Activated naive CD4-positive, alpha-beta T cell treated with anti-CD3 and anti-CD28 coated beads for 36 hours (primary cell): ENCODE measurements at regions of chr2 and their contacts with region 1.

Region 1: DNA sequence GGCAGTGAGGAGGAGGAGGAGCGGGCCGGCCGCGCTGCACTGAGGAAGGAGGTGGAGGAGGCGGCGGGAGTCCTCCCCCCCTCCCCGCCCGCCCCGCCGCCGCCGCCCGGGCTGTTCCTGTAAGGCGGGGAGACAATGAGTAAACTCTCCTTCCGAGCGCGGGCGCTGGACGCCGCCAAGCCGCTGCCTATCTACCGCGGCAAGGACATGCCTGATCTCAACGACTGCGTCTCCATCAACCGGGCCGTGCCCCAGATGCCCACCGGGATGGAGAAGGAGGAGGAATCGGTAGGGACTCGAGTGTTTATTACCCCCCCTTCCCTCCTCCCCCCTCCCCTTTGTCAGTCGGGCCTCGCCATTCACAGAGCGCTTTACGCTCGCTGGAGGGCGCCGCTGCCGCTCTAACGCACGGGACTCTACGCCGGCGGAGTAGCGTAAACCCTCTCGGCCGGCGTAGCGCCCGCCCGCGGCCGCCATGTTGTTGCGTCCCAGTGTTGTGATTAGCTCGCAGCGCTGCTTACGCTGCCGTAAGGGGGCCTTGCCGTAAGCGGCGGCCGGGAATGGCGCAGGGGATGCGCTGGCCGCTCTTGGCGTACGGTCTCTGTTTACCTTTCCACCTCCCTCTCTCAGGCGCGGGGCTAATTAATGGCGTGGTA is 460 bp downstream of the EPC2 start:
- DNase-seq: peak; percentile 94
- H3K4me3 Mint-ChIP-seq: peak overlapping the region; percentile 90
- H3K27ac Mint-ChIP-seq: peak overlapping the region; percentile 97
- H3K4me1 Mint-ChIP-seq: peaks cover 43% of the 10 kb centered on the region
- H3K27me3 Mint-ChIP-seq: no peaks in the 10 kb centered on the region

Region 2: DNA sequence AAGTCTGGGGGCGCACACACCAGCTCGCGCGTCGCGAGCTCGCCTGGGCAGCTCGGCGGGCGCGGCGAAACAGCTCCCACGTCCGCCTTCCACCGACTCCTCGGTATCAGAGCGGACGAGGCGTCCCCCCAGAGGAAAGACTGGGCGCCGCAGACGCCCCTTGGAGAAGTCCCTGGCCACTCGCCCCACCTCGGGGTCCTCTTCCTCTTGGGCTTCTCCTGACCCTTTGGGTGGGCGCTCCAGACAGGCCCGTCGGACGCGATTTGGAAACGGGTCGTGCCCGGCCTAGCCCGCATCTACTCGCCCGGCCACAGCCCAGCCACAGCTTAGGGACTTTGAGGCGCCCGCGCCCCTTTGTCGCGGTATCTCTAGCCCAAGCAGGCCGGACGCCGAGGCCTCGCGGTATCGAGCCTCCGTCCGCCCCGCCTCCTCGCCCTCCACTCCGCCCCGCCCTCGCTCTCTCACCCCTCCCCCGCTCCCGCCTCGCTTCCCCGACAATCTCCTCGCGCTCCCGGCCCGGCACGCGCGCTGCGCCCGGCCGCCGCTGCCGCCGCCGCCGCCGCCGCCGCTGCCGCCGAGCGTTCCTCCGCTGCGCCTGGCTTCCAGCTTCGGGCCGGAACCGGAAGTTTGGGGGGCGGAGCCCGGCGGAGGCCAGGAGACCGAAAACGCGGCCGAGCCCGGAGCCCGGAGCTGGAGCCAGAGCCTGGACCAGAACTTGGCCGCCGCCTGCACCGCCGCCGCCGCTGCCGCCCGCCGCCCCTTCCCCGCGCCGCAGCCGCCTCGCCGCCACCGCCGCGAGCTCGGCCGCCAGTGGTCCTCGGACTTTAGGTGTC is 800.9 kb before region 1 on chr2:
- CTCF ChIA-PET with region 1: no interaction called
- intact Hi-C with region 1: loop called (anchors 5 kb)
- DNase-seq: peak; percentile 89
- H3K4me3 Mint-ChIP-seq: peak overlapping the region; percentile 88
- H3K27ac Mint-ChIP-seq: peak overlapping the region; percentile 68
- H3K4me1 Mint-ChIP-seq: peaks cover 33% of the 10 kb centered on the region
- H3K27me3 Mint-ChIP-seq: peaks cover 12% of the 10 kb centered on the region

Region 3: DNA sequence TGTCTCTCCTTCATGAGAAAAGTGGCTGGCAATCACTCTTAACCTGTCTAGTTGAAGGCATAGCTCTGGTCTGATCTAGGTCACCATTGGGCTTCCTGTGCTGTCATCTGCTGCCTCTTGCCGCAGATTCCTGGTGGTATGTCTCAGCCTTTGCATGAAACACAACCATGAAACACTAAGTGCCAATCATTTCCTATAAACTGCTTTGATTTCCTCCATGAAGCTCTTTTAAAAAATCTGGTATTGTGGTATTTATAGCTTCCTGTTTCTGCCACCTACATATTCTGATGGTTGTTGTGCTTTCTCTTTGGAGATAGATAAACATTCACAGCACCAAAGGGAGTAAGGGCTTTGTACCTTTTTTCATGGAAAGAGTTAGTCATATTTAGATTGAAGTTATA is 120.5 kb before region 1 on chr2:
- CTCF ChIA-PET with region 1: interaction called, 7 read pairs
- intact Hi-C with region 1: loop called (anchors 1 kb)
- DNase-seq: peak; percentile 87
- H3K4me3 Mint-ChIP-seq: peak overlapping the region; percentile 14
- H3K27ac Mint-ChIP-seq: peak overlapping the region; percentile 94
- H3K4me1 Mint-ChIP-seq: peaks cover 85% of the 10 kb centered on the region
- H3K27me3 Mint-ChIP-seq: no peaks in the 10 kb centered on the region

Region 4: GRCh38 chr2:148603562-148603920 is 41.5 kb before region 1 on chr2:
- CTCF ChIA-PET with region 1: interaction called, 5 read pairs
- intact Hi-C with region 1: loop called (anchors 1 kb)
- DNase-seq: peak; percentile 56
- H3K4me3 Mint-ChIP-seq: no peak overlapping the region
- H3K27ac Mint-ChIP-seq: peak overlapping the region; percentile 82
- H3K4me1 Mint-ChIP-seq: peaks cover 16% of the 10 kb centered on the region
- H3K27me3 Mint-ChIP-seq: no peaks in the 10 kb centered on the region

Region 5: GRCh38 chr2:148702475-148702874 is 57.5 kb after region 1 on chr2:
- CTCF ChIA-PET with region 1: no interaction called
- intact Hi-C with region 1: loop called (anchors 1 kb)
- DNase-seq: no peak
- H3K4me3 Mint-ChIP-seq: no peak overlapping the region
- H3K27ac Mint-ChIP-seq: no peak overlapping the region
- H3K4me1 Mint-ChIP-seq: peaks cover 36% of the 10 kb centered on the region
- H3K27me3 Mint-ChIP-seq: no peaks in the 10 kb centered on the region

Region 6: DNA sequence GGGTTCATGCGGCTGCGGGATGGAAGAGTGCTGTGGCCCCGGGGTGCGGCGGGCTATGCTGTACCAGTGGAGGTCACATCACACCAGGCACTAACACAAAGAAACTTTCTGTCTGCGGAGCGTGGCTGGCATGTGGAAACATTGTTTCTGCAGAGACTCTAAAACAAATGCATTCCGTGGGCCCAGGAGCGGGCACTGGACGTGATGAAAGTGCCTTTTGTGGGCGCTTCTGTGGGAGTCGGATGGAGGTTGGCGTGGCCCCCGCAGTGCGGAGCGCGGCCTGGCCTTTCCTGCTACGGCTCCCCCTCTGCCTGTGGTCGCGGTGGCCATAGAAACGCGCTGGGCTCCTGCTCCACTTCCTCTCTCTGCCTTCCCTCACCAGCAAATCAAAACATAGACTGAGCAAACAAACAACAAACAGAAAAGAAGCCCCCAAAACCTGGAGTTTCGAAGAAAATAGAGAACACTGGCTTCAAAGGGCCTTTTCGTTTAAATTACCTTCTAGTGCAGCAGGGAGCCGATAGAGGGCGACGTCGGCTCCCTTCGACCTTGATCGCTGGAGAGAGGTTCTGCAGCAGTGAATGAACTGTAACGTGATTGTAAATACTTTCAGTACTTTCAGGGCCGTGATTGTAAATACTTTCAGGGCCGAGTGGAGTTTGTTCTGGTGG is 281.4 kb after region 1 on chr2:
- CTCF ChIA-PET with region 1: interaction called, 3 read pairs
- intact Hi-C with region 1: loop called (anchors 2 kb)
- DNase-seq: peak; percentile 67
- H3K4me3 Mint-ChIP-seq: peak overlapping the region; percentile 76
- H3K27ac Mint-ChIP-seq: peak overlapping the region; percentile 37
- H3K4me1 Mint-ChIP-seq: peaks cover 14% of the 10 kb centered on the region
- H3K27me3 Mint-ChIP-seq: no peaks in the 10 kb centered on the region

Region 7: DNA sequence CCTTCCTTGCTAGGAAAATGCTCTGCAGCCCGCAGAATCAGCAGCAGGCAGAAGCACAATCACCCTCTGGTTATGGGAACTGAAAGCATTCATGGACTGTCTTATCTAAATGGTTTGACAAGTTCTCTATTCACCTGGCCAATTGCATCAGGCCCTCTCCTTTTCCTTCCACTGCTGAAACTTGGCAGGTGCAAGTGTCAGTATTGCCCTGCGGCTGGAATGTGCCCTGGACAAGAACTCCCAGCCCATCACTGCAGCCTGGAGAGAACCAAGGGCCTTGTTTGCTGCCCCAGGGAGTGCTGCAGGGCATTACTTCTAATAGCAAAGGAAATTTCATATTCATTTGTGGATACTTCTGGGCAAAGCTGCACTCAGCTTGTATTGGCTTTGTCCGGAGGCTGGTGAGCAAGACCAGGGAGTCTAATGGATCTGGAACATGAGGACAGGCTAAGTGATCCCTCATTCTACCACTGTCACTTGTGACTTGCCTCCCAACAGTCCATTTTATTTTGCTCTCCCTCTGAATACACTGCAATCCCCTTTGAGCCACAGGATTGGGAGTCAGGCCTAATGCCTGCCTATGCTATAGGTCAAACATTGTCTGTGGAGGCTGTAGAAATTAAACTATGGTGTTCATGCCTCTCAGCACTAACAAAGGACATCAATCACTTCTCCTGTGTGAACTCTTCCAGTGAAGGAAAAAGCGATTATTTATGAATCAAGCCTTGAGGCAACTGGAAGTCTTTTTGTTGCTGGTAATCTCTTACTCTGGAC is 510.4 kb after region 1 on chr2:
- CTCF ChIA-PET with region 1: no interaction called
- intact Hi-C with region 1: no loop called
- DNase-seq: no peak
- H3K4me3 Mint-ChIP-seq: no peak overlapping the region
- H3K27ac Mint-ChIP-seq: no peak overlapping the region
- H3K4me1 Mint-ChIP-seq: peaks cover 1% of the 10 kb centered on the region
- H3K27me3 Mint-ChIP-seq: peaks cover 14% of the 10 kb centered on the region

Region 8: GRCh38 chr2:149587220-149587949 is 942.4 kb after region 1 on chr2 and contains the start of gene MMADHC:
- CTCF ChIA-PET with region 1: no interaction called
- intact Hi-C with region 1: loop called (anchors 1 kb)
- DNase-seq: peak; percentile 96
- H3K4me3 Mint-ChIP-seq: peak within 1 kb of the TSS; percentile 96
- H3K27ac Mint-ChIP-seq: peak within 1 kb of the TSS; percentile 98
- H3K4me1 Mint-ChIP-seq: peaks cover 30% of the 10 kb centered on the region
- H3K27me3 Mint-ChIP-seq: peaks cover 11% of the 10 kb centered on the region
- total RNA-seq, gene MMADHC: 142 to 143 TPM